ENCODE measurements at regions of chr10 and their contacts with region 1.

Region 1: GRCh38 chr10:76786504-76787072 is 851.0 kb downstream of the KCNMA1 start:
- DNase-seq: peak; percentile 58
- ATAC-seq: no peak
- H3K4me3 ChIP-seq: no peak overlapping the region
- H3K27ac ChIP-seq: no peak overlapping the region
- H3K4me1 ChIP-seq: no peaks in the 10 kb centered on the region
- H3K27me3 ChIP-seq: peaks cover 47% of the 10 kb centered on the region
- CTCF ChIP-seq: no peak

Region 2: DNA sequence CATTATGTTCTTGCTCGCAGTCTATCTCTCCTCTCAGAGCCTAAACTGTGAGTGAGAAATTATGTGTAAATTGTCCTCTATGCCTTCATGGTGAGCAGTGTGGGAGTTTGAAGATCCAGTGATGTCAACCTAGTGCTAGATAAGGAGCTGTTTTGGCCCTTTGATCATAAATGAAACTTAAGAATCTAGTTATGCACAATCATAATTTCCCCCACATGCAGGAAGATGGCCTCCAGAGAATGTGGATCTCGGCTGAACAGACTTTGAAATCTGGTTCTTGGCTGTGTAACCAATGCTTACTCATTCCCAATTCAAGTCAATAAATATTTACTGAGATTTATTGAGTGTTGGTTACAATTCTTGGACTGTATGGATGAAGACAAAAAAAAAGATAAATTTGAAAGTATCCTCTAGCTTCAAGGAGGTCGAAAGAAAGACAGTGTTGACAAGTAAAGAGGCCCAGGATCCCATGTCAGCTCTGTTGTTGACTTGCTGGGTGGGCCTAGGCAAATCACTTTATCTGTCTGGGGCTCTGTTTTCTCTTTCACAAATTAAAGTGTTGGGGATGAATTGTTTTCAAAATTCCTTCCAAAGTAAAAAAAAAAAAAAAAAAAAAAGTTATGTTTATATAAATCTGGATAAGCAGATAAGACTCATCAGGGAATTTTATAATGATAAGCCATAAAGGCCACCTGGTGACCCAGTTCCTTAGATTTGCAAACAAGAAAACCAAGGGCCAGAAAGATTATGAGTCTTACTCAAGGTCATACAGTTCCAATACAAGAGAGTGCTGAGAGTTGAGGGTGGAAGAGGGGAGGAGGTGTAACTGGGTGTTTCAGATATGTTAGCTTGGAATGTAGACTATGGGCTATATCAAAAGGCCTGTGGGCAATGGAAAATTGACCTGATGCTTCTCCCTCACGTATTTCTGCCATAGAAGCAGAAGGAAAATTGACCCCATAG is 118.9 kb before region 1 on chr10:
- CTCF ChIA-PET with region 1: no interaction called
- POLR2A ChIA-PET with region 1: no interaction called
- intact Hi-C with region 1: loop called (anchors 10 kb)
- DNase-seq: no peak
- ATAC-seq: no peak
- H3K4me3 ChIP-seq: no peak overlapping the region
- H3K27ac ChIP-seq: no peak overlapping the region
- H3K4me1 ChIP-seq: no peaks in the 10 kb centered on the region
- H3K27me3 ChIP-seq: peaks cover 14% of the 10 kb centered on the region; the same call in 1 of the 2 replicates
- CTCF ChIP-seq: no peak

Region 3: GRCh38 chr10:76868098-76868977 is 81.8 kb after region 1 on chr10:
- CTCF ChIA-PET with region 1: no interaction called
- POLR2A ChIA-PET with region 1: no interaction called
- intact Hi-C with region 1: loop called (anchors 2 kb)
- DNase-seq: peak; percentile 35
- ATAC-seq: peak; percentile 78
- H3K4me3 ChIP-seq: no peak overlapping the region
- H3K27ac ChIP-seq: no peak overlapping the region
- H3K4me1 ChIP-seq: no peaks in the 10 kb centered on the region
- H3K27me3 ChIP-seq: peaks cover 22% of the 10 kb centered on the region; the same call in 1 of the 2 replicates
- CTCF ChIP-seq: no peak